ENCODE measurements at regions of chr6 and their contacts with region 1.

Region 1: DNA sequence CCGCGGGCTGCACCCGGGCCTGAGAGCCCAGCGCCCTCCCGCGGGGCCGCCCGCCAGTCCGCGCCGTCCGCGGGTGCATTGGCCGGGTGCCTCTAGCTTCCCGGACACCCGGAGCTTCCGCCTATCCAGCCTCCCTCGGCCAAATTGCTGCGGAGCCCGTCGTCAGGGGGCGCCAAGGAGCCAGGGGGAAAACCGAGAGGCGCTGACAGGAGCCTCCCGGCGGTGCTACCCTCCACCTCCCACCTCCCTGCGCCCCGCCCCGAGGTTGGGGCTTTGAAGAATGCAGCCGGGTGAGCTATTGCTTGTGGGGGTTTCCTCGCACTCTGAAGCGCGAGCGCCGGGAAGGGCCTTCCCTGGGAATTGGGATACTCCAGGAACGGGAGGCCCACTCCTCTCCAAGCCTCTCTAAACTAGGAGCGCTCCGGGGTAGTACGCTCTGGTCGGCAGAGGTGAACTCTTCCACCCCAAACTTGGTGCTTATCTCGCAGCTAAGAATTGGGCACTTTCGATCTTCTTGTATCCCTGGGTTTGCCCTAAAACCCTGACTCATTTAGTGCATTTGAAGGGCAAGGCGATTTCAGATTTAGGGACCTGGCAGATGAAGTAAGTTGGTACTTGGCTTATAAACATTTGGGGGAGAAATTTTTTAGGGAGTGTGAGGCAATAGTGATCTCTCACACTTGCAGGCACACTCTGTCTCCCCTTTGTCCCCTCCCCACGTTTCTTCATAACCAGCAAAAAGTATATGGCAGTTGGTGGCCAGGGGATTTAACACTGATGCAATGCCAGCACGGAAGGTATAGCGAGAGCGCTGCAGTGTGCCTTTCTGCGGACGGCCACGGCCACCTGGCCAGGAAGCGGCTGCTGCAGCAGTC is 501 bp downstream of the BEND6 start:
- DNase-seq: peak; percentile 96
- H3K4me3 ChIP-seq: peak overlapping the region; percentile 50 to 87 (median 80)
- H3K27ac ChIP-seq: peak overlapping the region; percentile 50
- H3K4me1 ChIP-seq: peaks cover 45% of the 10 kb centered on the region
- H3K27me3 ChIP-seq: no peaks in the 10 kb centered on the region
- CTCF ChIP-seq: peak; percentile 59 to 94

Region 2: DNA sequence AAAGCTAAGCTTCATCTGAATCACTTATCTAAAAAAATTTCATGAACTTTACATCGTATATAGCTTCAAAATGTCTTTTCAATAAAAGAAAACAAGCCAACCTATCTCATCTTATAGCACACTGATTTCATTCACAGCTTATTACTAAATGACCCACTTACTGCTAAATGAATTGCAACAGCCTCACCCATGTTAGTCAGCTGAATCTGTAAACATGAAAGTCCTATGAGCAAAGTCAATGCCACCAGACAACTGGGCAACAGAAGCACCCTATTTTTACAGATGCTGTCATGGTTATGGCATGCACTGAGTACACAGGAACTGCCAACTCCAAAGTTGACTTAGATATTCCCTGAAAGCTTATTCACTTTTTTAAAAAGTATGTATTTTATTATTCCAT is 271.5 kb before region 1 on chr6:
- CTCF ChIA-PET with region 1: no interaction called
- dilution Hi-C with region 1: no loop called
- in situ Hi-C with region 1: no loop called
- intact Hi-C with region 1: no loop called
- DNase-seq: peak; percentile 89
- H3K4me3 ChIP-seq: no peak overlapping the region
- H3K27ac ChIP-seq: peak overlapping the region; percentile 43
- H3K4me1 ChIP-seq: peaks cover 15% of the 10 kb centered on the region
- H3K27me3 ChIP-seq: no peaks in the 10 kb centered on the region
- CTCF ChIP-seq: no peak

Region 3: DNA sequence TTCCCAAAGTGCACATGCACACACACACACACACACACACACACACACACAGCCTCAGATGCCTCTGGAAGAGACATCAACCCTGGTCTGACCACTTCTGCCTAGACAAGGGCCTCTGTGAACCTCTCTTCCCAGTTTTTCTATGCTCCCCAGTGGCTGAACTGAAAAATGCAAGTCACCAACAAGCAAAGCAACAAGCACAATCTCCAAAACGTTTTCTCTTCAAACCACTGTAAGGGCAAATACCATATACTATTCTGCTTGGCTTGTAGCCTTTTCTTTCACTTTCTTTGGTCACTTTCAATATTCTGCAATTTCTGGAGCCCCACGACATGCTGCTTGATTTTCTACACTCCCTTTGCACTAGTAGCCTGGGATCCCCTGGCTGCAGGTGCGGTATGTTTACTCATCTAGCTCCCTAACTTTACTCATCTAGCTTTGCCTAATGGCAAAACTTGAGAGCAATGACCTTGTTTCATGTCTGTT is 191.3 kb before region 1 on chr6:
- CTCF ChIA-PET with region 1: no interaction called
- dilution Hi-C with region 1: no loop called
- in situ Hi-C with region 1: no loop called
- intact Hi-C with region 1: loop called (anchors 10 kb)
- DNase-seq: peak; percentile 62
- H3K4me3 ChIP-seq: no peak overlapping the region
- H3K27ac ChIP-seq: no peak overlapping the region
- H3K4me1 ChIP-seq: peaks cover 29% of the 10 kb centered on the region
- H3K27me3 ChIP-seq: no peaks in the 10 kb centered on the region
- CTCF ChIP-seq: peak; percentile 57 to 63

Region 4: DNA sequence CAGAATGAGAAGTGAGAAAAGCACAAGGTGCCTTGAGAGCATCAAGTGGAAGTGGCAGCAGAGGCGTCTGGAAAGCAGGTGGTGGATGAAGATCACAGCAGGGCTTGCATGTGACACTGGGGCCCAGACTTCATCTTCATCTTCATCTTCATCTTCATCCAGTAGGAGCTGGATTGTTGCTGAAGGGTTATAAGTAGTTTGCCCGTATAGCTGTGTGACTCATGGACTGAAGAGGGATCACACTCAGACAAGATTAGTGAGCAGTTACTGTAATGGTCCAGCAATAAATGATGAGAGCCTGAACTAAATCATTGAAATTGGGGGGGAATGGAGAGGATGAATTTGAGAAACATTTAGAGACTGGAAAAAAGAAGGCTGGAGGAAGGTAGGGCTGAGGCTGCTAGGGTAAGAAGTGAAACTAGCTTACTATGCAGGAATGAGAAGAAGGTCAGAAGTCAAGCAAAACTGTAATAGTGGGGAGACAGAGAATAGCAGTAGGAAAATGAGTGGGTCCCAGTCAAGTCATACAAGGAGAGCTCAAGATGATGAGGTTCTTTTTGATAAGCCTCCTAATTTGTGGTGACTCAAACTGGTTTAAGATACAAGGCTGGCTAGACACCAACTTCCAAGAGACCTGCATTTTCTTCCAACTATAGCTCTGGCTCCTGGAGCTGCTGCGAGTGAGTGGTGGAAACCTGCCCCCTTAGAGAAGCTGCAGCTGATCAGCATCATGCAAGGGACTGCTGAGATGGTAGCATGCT is 92.8 kb before region 1 on chr6:
- CTCF ChIA-PET with region 1: no interaction called
- dilution Hi-C with region 1: no loop called
- in situ Hi-C with region 1: no loop called
- intact Hi-C with region 1: no loop called
- DNase-seq: peak; percentile 27
- H3K4me3 ChIP-seq: no peak overlapping the region
- H3K27ac ChIP-seq: no peak overlapping the region
- H3K4me1 ChIP-seq: peaks cover 52% of the 10 kb centered on the region
- H3K27me3 ChIP-seq: no peaks in the 10 kb centered on the region
- CTCF ChIP-seq: no peak

Region 5: GRCh38 chr6:56938649-56939191 is 16.7 kb before region 1 on chr6:
- CTCF ChIA-PET with region 1: interaction called, 4 read pairs
- dilution Hi-C with region 1: no loop called
- in situ Hi-C with region 1: no loop called
- intact Hi-C with region 1: loop called (anchors 1 kb)
- DNase-seq: peak; percentile 100
- H3K4me3 ChIP-seq: no peak overlapping the region
- H3K27ac ChIP-seq: peak overlapping the region; percentile 71
- H3K4me1 ChIP-seq: peaks cover 13% of the 10 kb centered on the region
- H3K27me3 ChIP-seq: no peaks in the 10 kb centered on the region
- CTCF ChIP-seq: no peak

Region 6: DNA sequence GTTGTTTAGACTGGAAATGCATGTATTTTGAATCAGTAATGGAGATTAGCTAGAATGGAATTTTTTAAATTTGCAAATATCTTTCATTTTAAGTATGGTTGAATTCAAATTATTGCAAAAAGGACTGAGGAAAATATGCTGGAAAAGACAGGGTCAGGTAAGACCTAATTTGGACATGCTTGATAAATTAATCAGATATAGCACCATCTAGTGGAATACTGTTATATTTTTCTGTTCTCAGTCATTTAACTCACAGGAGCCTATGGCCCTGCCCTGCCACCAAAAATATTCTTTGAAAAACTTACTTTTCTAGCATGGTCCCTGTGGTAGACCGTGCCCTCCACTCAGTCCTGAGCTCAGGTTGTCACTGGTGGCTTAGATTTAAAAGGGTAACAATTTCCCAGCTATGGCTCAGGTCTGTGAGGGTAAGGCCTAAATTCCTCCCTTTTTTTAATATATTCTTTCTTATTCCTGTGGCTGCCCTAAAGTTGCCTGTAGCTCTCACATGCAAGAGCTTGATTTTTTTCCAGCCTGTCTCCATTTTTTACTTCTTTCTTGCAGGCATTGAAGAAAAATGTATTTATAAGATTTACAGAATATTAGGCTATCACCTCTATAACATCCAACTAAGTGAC is 65.8 kb after region 1 on chr6:
- CTCF ChIA-PET with region 1: interaction called, 3 read pairs
- dilution Hi-C with region 1: no loop called
- in situ Hi-C with region 1: no loop called
- intact Hi-C with region 1: loop called (anchors 1 kb)
- DNase-seq: peak; percentile 30
- H3K4me3 ChIP-seq: no peak overlapping the region
- H3K27ac ChIP-seq: no peak overlapping the region
- H3K4me1 ChIP-seq: no peaks in the 10 kb centered on the region
- H3K27me3 ChIP-seq: no peaks in the 10 kb centered on the region
- CTCF ChIP-seq: peak; percentile 47 to 53

Region 7: GRCh38 chr6:57089687-57090460 is 134.5 kb after region 1 on chr6 and contains the start of gene ZNF451:
- CTCF ChIA-PET with region 1: no interaction called
- dilution Hi-C with region 1: no loop called
- in situ Hi-C with region 1: no loop called
- intact Hi-C with region 1: loop called (anchors 1 kb)
- DNase-seq: peak; percentile 97
- H3K4me3 ChIP-seq: peak within 1 kb of the TSS; percentile 66 to 70 (median 68)
- H3K27ac ChIP-seq: peak within 1 kb of the TSS; percentile 62
- H3K4me1 ChIP-seq: peaks cover 11% of the 10 kb centered on the region
- H3K27me3 ChIP-seq: no peaks in the 10 kb centered on the region
- CTCF ChIP-seq: no peak
- total RNA-seq, gene ZNF451: 63.0 to 71.7 TPM

Region 8: DNA sequence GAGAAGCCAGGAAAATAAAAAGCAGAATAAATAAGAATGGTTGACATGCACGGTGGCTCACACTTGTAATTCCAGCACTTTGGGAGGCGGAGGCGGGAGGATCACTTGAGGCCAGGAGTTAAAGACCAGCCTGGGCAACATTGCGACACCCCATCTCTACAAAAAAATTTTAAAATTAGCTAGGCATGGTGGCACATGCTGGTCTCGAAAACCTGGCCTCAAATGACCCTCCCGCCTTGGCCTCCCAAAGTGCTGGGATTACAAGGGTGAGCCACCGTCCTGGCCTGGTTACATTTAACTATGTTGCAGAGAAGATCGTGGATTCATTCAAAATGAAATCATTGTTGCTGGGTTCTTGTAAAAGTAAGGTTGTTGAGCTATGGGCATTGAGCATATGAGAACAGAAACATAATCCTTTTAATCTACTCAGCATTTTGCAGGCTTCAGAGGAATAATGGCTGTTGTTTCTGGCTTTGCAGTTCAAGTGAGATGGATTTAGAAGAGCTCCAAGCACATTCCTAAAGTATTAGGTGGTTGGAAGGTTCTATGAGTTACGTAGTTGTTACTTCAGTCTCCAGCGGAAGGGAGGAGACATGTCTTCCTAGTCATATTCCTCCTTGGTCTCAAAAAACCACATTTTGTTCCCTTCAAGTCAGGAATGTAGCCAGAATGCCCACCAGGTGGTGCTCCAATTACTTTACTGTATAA is 312.3 kb after region 1 on chr6:
- CTCF ChIA-PET with region 1: no interaction called
- dilution Hi-C with region 1: no loop called
- in situ Hi-C with region 1: no loop called
- intact Hi-C with region 1: no loop called
- DNase-seq: peak; percentile 94
- H3K4me3 ChIP-seq: no peak overlapping the region
- H3K27ac ChIP-seq: peak overlapping the region; percentile 24
- H3K4me1 ChIP-seq: peaks cover 14% of the 10 kb centered on the region
- H3K27me3 ChIP-seq: no peaks in the 10 kb centered on the region
- CTCF ChIP-seq: peak; percentile 55 to 75

Measured in mammary epithelial cell (primary cell).